Activated naive CD4-positive, alpha-beta T cell treated with anti-CD3 and anti-CD28 coated beads for 36 hours (primary cell): ENCODE measurements at regions of chr5 and their contacts with region 1.

Region 1: DNA sequence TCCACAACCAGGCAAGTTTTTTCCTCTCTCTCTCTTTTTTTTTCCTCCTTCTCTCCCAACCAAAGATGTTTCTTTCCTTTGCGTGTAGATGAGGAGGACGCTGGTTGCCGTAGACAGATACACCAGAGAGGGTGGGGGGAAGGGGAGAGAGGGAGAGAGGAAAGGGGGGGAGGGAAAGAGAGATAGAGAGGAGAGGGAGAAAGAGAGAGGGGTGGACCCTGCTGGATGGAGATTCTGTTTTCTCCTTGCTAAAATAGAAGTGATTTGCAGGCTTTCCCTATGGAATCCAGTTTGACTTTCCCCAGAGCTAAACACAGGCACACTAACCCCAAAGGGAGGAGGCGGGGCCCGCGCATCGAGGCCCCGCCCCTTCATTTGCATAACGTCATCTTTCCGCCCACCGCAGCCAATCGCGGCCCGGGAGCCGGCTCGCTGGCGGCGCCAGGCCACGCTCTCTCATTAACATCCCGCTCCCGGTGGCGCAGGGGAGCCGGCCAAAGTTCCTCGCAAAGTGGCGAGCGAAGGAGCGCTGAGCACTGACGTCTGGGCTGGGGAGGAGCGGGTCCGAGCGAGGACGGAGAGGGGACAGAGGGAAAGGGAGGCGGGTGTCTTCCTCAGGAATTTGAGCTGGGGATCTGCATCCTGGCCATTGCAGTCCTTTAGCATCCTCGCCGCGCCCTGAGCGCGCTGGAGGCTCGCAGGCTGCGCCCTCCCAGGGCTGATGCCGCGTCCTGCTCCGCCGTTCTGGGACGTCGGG is 487 bp upstream of the EBF1 start:
- DNase-seq: peak; percentile 85
- H3K4me3 Mint-ChIP-seq: peak overlapping the region; percentile 85
- H3K27ac Mint-ChIP-seq: peak overlapping the region; percentile 55
- H3K4me1 Mint-ChIP-seq: peaks cover 34% of the 10 kb centered on the region
- H3K27me3 Mint-ChIP-seq: peaks cover 58% of the 10 kb centered on the region

Region 2: DNA sequence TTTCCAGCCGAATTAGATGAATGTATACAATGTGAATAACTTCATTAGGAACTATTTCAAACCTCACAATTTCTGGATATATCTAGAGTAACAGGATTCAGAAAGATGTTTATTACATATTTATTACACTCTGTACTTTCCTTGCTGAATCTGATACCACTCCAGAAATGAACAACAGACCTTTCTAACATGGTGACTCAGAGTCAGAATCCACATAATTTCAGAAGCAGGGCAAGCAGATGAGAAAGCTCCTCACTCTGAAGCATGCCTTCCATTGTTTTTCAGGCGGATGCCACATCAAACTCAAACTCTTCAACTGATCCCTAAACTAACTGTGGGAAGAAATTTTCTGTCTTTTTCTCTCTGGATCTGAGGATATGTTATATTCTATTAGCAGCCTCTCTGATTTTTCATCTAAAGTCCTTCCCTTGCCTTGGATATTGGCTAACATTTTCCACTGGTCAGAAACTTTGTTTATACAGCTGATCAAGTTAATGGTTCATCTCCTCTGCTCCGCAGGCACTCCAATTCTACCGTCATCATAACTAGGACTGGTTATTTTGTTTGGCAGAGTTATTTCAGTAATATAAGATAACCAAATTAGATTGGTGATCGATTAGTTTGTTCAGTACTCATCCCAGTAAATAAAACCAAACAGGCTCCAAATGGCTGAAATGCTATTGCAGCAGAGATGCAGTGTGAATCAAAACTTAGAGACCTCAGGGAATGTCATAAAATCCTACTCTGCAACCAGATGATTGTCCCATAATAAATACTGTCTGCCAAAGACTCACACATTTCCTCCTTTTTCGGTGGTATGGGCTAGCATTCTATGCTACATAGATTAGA is 556.4 kb before region 1 on chr5:
- CTCF ChIA-PET with region 1: no interaction called
- intact Hi-C with region 1: loop called (anchors 10 kb)
- DNase-seq: peak; percentile 18
- H3K4me3 Mint-ChIP-seq: no peak overlapping the region
- H3K27ac Mint-ChIP-seq: no peak overlapping the region
- H3K4me1 Mint-ChIP-seq: peaks cover 39% of the 10 kb centered on the region
- H3K27me3 Mint-ChIP-seq: no peaks in the 10 kb centered on the region

Region 3: DNA sequence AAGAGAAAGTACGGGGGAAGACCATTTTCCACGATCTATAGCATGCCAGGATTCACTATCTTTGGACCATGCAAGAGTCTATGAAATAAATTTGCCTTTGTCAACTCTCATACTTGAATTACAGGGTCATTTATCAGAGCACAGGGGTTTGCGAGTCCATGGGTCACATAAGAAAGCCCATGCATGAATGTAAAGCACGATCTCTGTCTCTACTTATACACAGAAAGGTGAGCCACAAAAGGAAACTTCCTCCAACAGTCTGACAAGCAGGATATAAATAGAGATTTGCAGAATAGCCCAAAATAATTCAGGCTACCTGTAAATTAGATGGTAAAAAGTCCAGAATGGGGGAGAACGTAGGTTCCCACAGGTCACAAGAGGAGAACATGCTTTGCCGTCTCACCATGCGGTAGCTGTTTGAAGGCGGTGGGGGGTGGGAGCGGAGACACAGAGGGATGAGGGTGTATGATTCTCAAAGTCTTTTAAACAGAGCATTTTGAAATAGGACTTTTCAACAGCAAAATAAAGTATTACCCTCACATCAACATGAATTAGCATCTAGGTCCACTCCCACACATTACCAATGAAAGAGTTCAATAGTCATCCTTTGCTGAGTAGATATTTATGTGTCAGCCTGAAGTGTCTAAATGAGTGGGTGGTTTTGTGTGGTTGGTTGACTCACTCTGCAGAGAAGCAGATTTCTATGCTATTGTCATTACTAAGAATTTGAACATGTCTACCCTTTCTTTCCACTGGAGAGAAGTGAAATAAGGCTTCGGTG is 280.2 kb before region 1 on chr5:
- CTCF ChIA-PET with region 1: no interaction called
- intact Hi-C with region 1: loop called (anchors 1 kb)
- DNase-seq: peak; percentile 42
- H3K4me3 Mint-ChIP-seq: no peak overlapping the region
- H3K27ac Mint-ChIP-seq: no peak overlapping the region
- H3K4me1 Mint-ChIP-seq: peaks cover 28% of the 10 kb centered on the region
- H3K27me3 Mint-ChIP-seq: peaks cover 2% of the 10 kb centered on the region

Region 4: GRCh38 chr5:158943057-158943456 is 157.1 kb before region 1 on chr5:
- CTCF ChIA-PET with region 1: no interaction called
- intact Hi-C with region 1: loop called (anchors 5 kb)
- DNase-seq: no peak
- H3K4me3 Mint-ChIP-seq: no peak overlapping the region
- H3K27ac Mint-ChIP-seq: no peak overlapping the region
- H3K4me1 Mint-ChIP-seq: no peaks in the 10 kb centered on the region
- H3K27me3 Mint-ChIP-seq: no peaks in the 10 kb centered on the region

Region 5: GRCh38 chr5:159120446-159120845 is 20.2 kb after region 1 on chr5:
- CTCF ChIA-PET with region 1: no interaction called
- intact Hi-C with region 1: loop called (anchors 1 kb)
- DNase-seq: no peak
- H3K4me3 Mint-ChIP-seq: peak overlapping the region; percentile 51
- H3K27ac Mint-ChIP-seq: peak overlapping the region; percentile 70
- H3K4me1 Mint-ChIP-seq: peaks cover 26% of the 10 kb centered on the region
- H3K27me3 Mint-ChIP-seq: no peaks in the 10 kb centered on the region

Region 6: DNA sequence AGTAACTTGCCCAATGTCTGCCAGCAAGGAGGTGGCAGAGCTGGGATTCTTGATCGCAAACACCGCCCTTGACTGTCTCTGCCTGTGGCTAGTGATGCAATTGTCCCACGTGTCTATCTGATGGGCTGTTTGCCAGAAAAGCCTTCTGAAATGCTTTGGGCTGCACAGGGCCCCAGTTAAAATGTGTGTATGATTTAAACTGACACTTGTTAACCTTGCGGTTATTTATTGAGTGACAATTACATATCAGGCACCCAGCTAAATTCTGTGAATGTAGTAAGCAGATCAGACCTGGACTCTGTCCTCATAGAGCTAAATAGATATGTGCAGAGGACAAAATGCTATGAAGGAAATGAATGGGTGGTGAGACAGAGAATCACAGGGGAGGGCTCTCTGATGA is 241.7 kb after region 1 on chr5:
- CTCF ChIA-PET with region 1: no interaction called
- intact Hi-C with region 1: no loop called
- DNase-seq: peak; percentile 15
- H3K4me3 Mint-ChIP-seq: no peak overlapping the region
- H3K27ac Mint-ChIP-seq: no peak overlapping the region
- H3K4me1 Mint-ChIP-seq: peaks cover 33% of the 10 kb centered on the region
- H3K27me3 Mint-ChIP-seq: no peaks in the 10 kb centered on the region